ENCODE measurements at regions of chr18 and their contacts with region 1.

Region 1: DNA sequence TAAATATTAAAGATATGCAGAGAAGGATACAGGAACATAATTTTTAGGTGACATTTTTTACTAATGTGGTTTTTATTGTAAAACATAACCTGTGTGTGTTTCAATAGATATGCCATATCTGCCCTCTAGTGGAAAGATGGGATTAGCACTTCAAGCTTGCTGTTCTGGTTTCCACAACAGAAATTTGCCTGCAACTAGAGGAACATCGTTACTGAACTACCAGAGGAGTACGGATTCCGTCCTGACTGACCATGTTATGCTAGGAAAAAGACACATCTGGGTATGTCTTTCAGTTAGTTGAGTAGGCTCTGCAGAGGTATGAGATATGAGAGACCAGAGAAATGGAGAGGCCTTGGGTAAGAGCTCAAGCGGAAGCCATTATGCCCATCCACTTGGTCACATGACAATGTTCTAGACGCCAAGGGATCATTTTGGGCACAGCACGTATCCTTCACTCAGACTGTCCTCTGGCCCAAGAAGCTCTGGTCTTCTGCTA is 104.9 kb downstream of the MBD2 start:
- DNase-seq: peak; percentile 9
- H3K4me3 Mint-ChIP-seq: peak overlapping the region; percentile 4
- H3K27ac Mint-ChIP-seq: no peak overlapping the region
- H3K4me1 Mint-ChIP-seq: peaks cover 7% of the 10 kb centered on the region
- H3K27me3 Mint-ChIP-seq: peaks cover 15% of the 10 kb centered on the region

Region 2: DNA sequence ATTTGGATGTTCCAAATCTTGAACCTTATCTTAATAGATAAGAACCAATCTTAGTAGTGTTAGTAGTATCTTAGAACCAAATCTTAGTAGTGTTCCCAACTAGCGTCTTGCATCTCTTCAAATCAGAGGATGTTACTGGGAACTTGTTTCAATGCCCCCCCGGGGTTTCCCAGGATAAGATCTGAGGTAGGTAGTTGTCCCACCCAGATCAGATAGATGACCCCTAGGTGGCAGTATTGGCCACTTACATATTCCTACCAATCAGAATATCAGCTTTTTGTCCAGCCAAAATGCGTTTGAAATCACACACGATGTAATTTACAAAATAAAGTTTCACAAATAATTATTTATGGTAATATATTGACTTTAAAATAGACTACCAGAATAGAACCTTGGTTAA is 209.9 kb before region 1 on chr18:
- intact Hi-C with region 1: loop called (anchors 1 kb)
- DNase-seq: no peak
- H3K4me3 Mint-ChIP-seq: no peak overlapping the region
- H3K27ac Mint-ChIP-seq: no peak overlapping the region
- H3K4me1 Mint-ChIP-seq: no peaks in the 10 kb centered on the region
- H3K27me3 Mint-ChIP-seq: no peaks in the 10 kb centered on the region

Region 3: GRCh38 chr18:53937037-53937436 is 182.5 kb before region 1 on chr18:
- intact Hi-C with region 1: no loop called
- DNase-seq: no peak
- H3K4me3 Mint-ChIP-seq: no peak overlapping the region
- H3K27ac Mint-ChIP-seq: no peak overlapping the region
- H3K4me1 Mint-ChIP-seq: peaks cover 8% of the 10 kb centered on the region
- H3K27me3 Mint-ChIP-seq: no peaks in the 10 kb centered on the region

Region 4: GRCh38 chr18:54130618-54131017 is 11.0 kb after region 1 on chr18:
- intact Hi-C with region 1: no loop called
- DNase-seq: no peak
- H3K4me3 Mint-ChIP-seq: no peak overlapping the region
- H3K27ac Mint-ChIP-seq: no peak overlapping the region
- H3K4me1 Mint-ChIP-seq: peaks cover 17% of the 10 kb centered on the region
- H3K27me3 Mint-ChIP-seq: no peaks in the 10 kb centered on the region

Region 5: GRCh38 chr18:54162431-54162830 is 42.9 kb after region 1 on chr18:
- intact Hi-C with region 1: no loop called
- DNase-seq: no peak
- H3K4me3 Mint-ChIP-seq: no peak overlapping the region
- H3K27ac Mint-ChIP-seq: no peak overlapping the region
- H3K4me1 Mint-ChIP-seq: peaks cover 25% of the 10 kb centered on the region
- H3K27me3 Mint-ChIP-seq: no peaks in the 10 kb centered on the region

Region 6: GRCh38 chr18:54580202-54580729 is 460.7 kb after region 1 on chr18:
- intact Hi-C with region 1: no loop called
- DNase-seq: no peak
- H3K4me3 Mint-ChIP-seq: no peak overlapping the region
- H3K27ac Mint-ChIP-seq: no peak overlapping the region
- H3K4me1 Mint-ChIP-seq: no peaks in the 10 kb centered on the region
- H3K27me3 Mint-ChIP-seq: no peaks in the 10 kb centered on the region

Measured in activated T-helper 2 cell treated with anti-CD3 and anti-CD28 coated beads, Interferon-gamma antibody, Interleukin-2, Interleukin-4, amounts not matched to agents 10 μg/mL and 5 μg/mL and 100 μg/mL, durations not matched to agents 14 hours and 24 hours and 36 hours (primary cell).